Dorsolateral prefrontal cortex (tissue), 120 donors: ENCODE measurements at regions of chr22 and their contacts with region 1.

Region 1: GRCh38 chr22:23539135-23539838 is 40.8 kb downstream of the IGLL1 start:
- DNase-seq: peak; percentile 65 to 90 (median 84)
- H3K4me3 ChIP-seq: peak overlapping the region in 38 of 59 donors; percentile 8 to 47 (median 30)
- H3K27ac ChIP-seq: peak overlapping the region in 2 of 59 donors; percentile 4 to 10
- H3K27me3 ChIP-seq: no peaks in the 10 kb centered on the region
- CTCF ChIP-seq: peak; percentile 56 to 94 (median 88)

Region 2: GRCh38 chr22:23178512-23179254 is 360.6 kb before region 1 on chr22:
- intact Hi-C with region 1: loop called in 1 of 2 experiments (anchors 10 kb)
- DNase-seq: peak; percentile 58 to 84 (median 72)
- H3K4me3 ChIP-seq: peak overlapping the region in 5 of 59 donors; percentile 16 to 71 (median 54)
- H3K27ac ChIP-seq: peak overlapping the region in 43 of 59 donors; percentile 7 to 82 (median 68)
- H3K27me3 ChIP-seq: no peaks in the 10 kb centered on the region
- CTCF ChIP-seq: peak; percentile 88 to 99 (median 97)

Region 3: GRCh38 chr22:23322547-23322946 is 216.7 kb before region 1 on chr22:
- intact Hi-C with region 1: loop called in 1 of 2 experiments (anchors 5 kb)
- DNase-seq: no peak
- H3K4me3 ChIP-seq: no peak overlapping the region
- H3K27ac ChIP-seq: no peak overlapping the region
- H3K27me3 ChIP-seq: no peaks in the 10 kb centered on the region
- CTCF ChIP-seq: no peak

Region 4: DNA sequence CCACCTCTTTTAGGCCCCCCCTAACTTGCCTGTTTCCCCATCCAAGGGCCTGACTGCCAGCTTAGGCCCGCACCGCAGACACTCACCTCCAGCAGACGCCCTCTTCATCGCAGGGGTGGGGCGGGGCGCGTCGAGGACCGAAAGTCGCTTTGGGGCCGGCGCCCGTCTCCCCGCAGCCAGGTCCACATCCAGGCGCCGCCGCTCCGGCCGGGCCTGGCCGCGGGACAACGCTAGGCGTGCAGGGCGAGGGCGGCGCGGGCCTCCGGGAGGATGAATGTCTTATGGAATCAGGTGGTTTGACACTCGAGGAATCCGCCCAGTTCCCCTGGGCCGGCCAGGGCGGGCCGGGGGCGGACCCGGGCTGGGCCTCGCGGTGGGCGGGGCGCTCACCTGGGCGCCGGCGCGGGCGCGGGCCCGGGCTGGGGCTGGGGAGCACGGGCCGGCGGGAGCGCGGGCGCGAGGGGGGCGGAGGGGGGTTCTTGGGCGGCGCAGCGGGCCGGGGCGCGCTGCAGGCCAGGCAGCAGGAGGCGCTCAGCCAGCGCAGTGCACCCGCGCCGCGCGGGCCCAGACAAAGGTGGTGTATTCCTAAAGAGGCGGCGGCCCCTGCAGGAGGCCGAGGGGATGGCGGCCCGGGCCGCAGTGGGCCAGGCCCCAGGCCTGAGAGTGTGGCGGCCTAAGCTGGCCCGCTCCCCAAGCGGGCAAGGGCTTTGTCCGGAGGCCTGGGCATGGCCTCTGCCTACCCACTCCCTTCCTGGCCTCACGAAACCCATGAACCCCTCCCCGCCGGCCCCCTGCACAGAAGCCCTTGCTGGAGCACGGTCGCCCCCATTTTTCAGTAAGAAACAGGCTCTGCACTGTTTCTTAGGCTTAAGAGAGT is 136.8 kb before region 1 on chr22:
- intact Hi-C with region 1: loop called (anchors 5 kb)
- DNase-seq: peak in 7 of 10 donors; percentile 49 to 73 (median 57)
- H3K4me3 ChIP-seq: peak overlapping the region; percentile 29 to 71 (median 56)
- H3K27ac ChIP-seq: peak overlapping the region in 50 of 59 donors; percentile 19 to 84 (median 67)
- H3K27me3 ChIP-seq: no peaks in the 10 kb centered on the region
- CTCF ChIP-seq: peak in 55 of 56 donors; percentile 11 to 72 (median 56)

Region 5: GRCh38 chr22:23849009-23850006 is 310.0 kb after region 1 on chr22:
- intact Hi-C with region 1: loop called (anchors 5 to 10 kb)
- DNase-seq: peak; percentile 69 to 92 (median 82)
- H3K4me3 ChIP-seq: peak overlapping the region in 37 of 59 donors; percentile 8 to 48 (median 31)
- H3K27ac ChIP-seq: peak overlapping the region in 10 of 59 donors; percentile 21 to 67 (median 35)
- H3K27me3 ChIP-seq: no peaks in the 10 kb centered on the region
- CTCF ChIP-seq: peak; percentile 82 to 99 (median 97)